ENCODE measurements at regions of chr1 and their contacts with region 1.

Region 1: DNA sequence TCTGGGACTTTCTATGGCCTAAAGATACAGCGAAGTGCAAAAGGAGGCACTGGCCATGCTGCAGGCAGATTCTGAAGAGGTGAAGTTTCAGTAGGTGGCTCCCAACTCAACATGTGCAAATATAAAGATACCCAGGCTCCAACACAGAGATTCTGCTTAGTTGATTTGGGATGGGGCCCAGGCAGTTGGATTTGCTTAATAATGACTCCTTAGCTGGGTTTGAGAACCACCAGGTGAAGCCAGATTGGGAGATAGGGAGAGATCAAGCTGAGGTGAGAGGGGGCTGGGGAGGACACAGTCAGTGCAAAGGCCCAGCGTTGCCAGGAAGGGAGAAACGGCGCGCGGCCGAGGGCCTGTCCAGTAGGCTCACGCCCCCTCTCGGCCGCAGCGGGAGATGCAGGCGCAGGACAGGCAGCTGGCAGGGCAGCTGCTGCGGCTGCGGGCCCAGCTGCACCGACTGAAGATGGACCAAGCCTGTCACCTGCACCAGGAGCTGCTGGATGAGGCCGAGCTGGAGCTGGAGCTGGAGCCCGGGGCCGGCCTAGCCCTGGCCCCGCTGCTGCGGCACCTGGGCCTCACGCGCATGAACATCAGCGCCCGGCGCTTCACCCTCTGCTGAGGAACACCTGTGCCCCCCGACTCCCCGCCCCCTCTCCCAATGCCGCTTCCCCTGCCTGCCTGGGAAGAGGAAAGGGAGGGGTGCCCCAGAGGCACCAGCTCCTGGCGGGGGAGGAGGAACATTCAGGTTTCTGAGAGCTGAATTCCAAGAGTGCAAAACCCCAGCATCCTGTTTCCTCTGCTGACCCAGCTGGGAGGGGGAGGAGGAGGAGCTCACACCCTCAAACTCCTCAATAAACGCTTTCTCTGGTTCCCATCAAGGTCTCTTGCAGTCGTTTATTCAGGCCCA is 1.2 kb downstream of the FAM167B start:
- DNase-seq: peak; percentile 85
- ATAC-seq: peak; percentile 10
- H3K4me3 Mint-ChIP-seq: peak overlapping the region; percentile 99
- H3K27ac Mint-ChIP-seq: peak overlapping the region; percentile 99
- H3K4me1 Mint-ChIP-seq: peaks cover 45% of the 10 kb centered on the region
- H3K27me3 Mint-ChIP-seq: no peaks in the 10 kb centered on the region

Region 2: GRCh38 chr1:32179443-32180185 is 68.6 kb before region 1 on chr1 and contains the start of gene TXLNA:
- POLR2A ChIA-PET with region 1: interaction called, 14 read pairs
- DNase-seq: peak; percentile 93
- ATAC-seq: peak; percentile 89
- H3K4me3 Mint-ChIP-seq: peak within 1 kb of the TSS; percentile 92
- H3K27ac Mint-ChIP-seq: peak within 1 kb of the TSS; percentile 98
- H3K4me1 Mint-ChIP-seq: peaks cover 28% of the 10 kb centered on the region
- H3K27me3 Mint-ChIP-seq: no peaks in the 10 kb centered on the region
- total RNA-seq, gene TXLNA: 62.5 to 68.8 TPM

Region 3: GRCh38 chr1:32215629-32216480 is 32.4 kb before region 1 on chr1:
- POLR2A ChIA-PET with region 1: interaction called, 16 read pairs
- DNase-seq: peak; percentile 53
- ATAC-seq: peak; percentile 86
- H3K4me3 Mint-ChIP-seq: no peak overlapping the region
- H3K27ac Mint-ChIP-seq: peak overlapping the region; percentile 60
- H3K4me1 Mint-ChIP-seq: peaks cover 11% of the 10 kb centered on the region
- H3K27me3 Mint-ChIP-seq: no peaks in the 10 kb centered on the region

Region 4: GRCh38 chr1:32266921-32267591 is 18.8 kb after region 1 on chr1:
- POLR2A ChIA-PET with region 1: interaction called, 183 read pairs
- DNase-seq: no peak
- ATAC-seq: peak; percentile 44
- H3K4me3 Mint-ChIP-seq: peak overlapping the region; percentile 90
- H3K27ac Mint-ChIP-seq: peak overlapping the region; percentile 99
- H3K4me1 Mint-ChIP-seq: peaks cover 48% of the 10 kb centered on the region
- H3K27me3 Mint-ChIP-seq: no peaks in the 10 kb centered on the region

Region 5: GRCh38 chr1:32273388-32274208 is 25.4 kb after region 1 on chr1:
- POLR2A ChIA-PET with region 1: interaction called, 183 read pairs
- DNase-seq: peak; percentile 70
- ATAC-seq: peak; percentile 80
- H3K4me3 Mint-ChIP-seq: peak overlapping the region; percentile 83
- H3K27ac Mint-ChIP-seq: peak overlapping the region; percentile 91
- H3K4me1 Mint-ChIP-seq: peaks cover 56% of the 10 kb centered on the region
- H3K27me3 Mint-ChIP-seq: no peaks in the 10 kb centered on the region

Region 6: GRCh38 chr1:32291708-32292492 is 43.7 kb after region 1 on chr1 and contains the start of gene HDAC1:
- POLR2A ChIA-PET with region 1: interaction called, 60 read pairs
- DNase-seq: peak; percentile 96
- ATAC-seq: peak; percentile 99
- H3K4me3 Mint-ChIP-seq: peak within 1 kb of the TSS; percentile 100
- H3K27ac Mint-ChIP-seq: peak within 1 kb of the TSS; percentile 87
- H3K4me1 Mint-ChIP-seq: peaks cover 29% of the 10 kb centered on the region
- H3K27me3 Mint-ChIP-seq: no peaks in the 10 kb centered on the region
- total RNA-seq, gene HDAC1: 195 to 197 TPM

Measured in activated naive CD8-positive, alpha-beta T cell treated with anti-CD3 and anti-CD28 coated beads, Interleukin-2, amount 10 ng/mL, durations not matched to agents 7 days and 5 days (primary cell).